ENCODE measurements at regions of chr5 and their contacts with region 1.

Region 1: DNA sequence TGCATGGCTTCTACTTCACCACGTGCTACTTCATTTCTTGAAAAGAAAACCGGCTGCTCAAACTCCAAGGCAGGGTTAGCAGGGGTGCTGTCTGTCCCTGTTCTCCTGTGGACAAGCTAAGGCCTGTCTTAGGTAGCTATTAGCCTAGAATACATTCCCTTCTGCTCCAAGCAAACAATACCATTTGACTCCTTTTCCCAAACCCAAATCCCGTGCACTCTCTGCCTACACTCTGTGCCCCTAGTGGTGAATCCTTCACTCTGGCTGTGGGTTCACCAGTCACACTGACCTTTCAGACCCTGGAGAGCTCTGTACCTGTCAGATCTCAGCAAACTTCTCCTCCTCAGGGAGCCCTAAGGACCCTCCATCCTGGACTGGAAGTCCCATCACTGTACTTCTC is 211.6 kb downstream of the SLIT3 start:
- DNase-seq: no peak

Region 2: DNA sequence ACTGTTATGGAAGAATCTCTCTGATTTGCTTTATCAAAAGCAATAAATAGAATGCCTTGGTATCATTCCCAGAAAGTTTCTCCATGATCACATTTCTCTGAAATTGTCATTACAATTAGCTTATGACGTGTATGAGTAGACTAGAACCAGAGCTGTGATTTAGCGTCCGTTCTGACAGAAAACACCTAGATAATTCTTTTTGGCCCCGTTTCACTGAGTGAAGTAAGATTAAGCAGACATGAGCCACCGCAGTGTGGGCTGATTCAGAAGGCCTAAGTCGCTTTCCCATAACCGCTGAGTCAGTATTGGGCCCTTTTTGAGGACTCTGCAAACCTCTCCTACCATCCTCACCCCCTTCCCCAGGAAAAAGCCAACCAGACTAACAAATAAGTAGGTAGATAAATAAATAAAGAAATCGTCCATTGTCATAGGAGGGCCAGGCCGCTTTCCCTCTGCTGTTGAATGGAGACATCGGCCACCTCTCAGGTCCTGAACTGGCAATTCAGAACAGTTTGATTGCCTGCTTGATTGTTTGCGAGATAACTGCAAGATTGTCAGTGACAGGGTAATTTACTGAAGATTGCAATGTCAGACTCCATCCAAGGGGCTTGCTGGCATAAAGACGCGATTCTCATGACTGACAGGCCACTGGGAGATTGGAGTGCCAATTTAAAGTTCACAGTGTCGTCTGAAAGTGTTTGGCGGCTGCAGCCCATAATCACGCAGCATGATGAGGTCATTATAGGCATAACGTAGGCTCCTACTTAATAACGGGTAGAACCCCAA is 902.9 kb before region 1 on chr5:
- intact Hi-C with region 1: loop called in 1 of 2 experiments (anchors 5 kb)
- DNase-seq: no peak

Region 3: DNA sequence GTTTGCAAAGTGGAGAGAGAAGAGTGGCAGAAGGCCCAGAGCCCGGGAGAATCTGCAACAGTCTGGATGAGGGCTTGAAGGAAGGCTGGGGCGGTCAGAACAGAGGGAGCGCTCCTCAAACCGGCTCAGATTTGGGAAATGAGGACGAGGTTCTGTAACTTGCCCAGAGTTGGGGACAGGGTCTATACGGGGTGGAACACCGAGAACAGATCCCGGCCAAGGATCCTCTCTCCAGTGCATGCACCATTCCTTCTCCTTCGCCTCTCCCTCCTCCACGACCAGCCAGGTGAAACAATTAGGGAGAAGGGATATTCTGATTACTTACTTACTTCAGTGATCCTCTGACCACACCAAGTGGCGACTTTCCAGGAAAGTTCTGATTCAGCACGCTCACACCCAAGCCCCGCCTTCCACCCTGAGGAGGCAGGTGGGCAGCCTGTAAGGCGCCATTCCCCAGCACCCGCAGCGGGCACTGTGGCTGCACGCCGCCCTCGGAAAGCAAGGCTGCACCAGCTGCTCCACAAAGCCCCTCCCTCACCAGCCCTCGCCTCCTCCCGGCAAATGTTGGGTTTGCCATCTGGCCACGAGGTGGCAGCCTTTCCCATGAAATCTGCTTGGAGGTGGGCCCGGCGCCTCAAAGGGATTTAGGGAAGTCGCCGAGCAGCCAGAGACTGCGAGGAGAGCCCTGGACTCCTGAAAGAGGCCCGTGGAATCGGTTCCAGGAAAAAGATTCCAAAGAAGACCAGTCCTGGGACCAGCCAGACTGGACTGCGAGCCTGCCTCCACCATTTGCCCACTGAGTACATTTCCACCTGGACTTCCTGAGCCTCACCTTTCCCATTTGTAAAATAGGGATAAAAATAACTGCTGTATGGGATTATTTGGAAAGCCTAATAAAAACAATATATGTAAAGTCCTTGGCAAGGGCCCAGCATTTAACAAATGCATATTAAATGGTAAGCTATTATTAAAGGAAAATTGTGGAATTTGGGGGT is 820.1 kb before region 1 on chr5:
- intact Hi-C with region 1: no loop called
- DNase-seq: peak; percentile 93

Region 4: GRCh38 chr5:169052207-169052606 is 37.1 kb before region 1 on chr5:
- intact Hi-C with region 1: loop called in 1 of 2 experiments (anchors 1 kb)
- DNase-seq: no peak